Mammary epithelial cell (primary cell): ENCODE measurements at regions of chr16 and their contacts with region 1.

Region 1: DNA sequence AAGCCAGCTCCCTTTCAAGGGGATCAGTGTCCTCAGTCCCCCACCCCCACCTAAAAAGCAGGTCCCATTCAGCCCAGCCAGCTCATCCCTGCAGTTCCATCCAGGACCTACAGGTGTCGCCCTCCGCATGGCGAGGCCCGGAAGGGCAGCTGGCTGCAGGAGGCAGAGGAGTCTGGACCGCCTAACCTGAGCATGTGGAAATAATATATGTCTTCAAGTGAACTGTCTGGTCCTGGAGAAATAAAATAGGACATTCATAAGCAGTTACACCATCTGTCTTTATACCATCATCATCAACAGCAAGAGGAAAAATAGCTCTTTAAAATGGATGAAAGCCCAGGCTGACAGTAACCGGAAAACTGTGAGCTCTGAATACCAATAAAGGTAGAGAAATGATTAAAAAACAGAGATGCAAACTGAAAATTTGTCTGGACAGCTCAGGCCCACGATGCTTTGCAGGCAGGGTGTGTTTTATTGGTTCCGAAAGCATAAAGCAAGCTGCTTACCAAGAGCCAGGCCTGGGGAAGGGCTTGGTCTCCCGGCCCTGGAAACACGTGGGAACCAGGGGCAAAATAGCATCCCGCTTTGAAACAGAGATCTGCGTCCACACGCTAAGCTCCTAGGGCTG is 215.2 kb downstream of the ZFHX3 start:
- DNase-seq: peak; percentile 52
- H3K4me3 ChIP-seq: no peak overlapping the region
- H3K27ac ChIP-seq: no peak overlapping the region
- H3K4me1 ChIP-seq: peaks cover 6% of the 10 kb centered on the region
- H3K27me3 ChIP-seq: no peaks in the 10 kb centered on the region
- CTCF ChIP-seq: peak; percentile 98 to 99

Region 2: DNA sequence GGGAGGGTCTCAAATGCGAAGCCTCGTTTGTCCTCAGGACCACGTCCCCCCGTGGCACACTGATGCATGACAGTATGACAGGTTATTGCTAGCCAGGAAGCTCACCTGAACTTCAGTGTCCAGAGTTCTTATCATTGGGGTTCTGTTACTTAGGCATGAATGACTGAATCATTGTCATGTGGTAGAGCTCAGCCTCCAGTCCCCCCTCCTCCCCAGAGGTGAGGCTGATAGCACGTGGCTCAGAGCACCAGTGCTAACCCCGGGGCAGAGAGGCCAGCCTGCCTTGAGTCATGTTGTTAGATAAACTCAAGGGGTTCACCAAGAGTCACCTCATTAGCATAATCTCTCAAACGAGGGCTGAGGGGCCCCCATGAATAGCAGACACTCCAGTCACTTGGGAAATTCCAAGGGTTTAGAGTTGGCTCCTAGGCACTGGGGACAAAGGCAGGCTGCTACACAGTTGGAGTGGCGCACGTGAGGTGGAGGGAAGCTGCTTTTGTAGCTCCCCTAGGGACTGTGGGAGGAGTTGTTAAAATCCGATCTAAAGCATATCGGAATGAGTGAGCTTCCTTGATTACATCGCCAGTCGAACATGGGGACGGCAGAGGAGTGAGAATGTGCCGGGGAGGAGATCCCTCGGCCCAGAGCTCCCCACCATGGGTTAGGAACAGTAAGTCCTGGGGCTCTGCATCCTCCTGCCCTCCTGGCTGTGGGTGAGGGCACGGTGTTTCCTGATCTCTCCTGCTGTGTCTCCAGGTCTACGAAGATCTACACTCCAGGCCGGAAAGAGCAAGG is 720.9 kb before region 1 on chr16:
- CTCF ChIA-PET with region 1: interaction called, 17 read pairs
- dilution Hi-C with region 1: no loop called
- in situ Hi-C with region 1: no loop called
- intact Hi-C with region 1: no loop called
- DNase-seq: no peak
- H3K4me3 ChIP-seq: no peak overlapping the region
- H3K27ac ChIP-seq: no peak overlapping the region
- H3K4me1 ChIP-seq: no peaks in the 10 kb centered on the region
- H3K27me3 ChIP-seq: no peaks in the 10 kb centered on the region
- CTCF ChIP-seq: no peak

Region 3: DNA sequence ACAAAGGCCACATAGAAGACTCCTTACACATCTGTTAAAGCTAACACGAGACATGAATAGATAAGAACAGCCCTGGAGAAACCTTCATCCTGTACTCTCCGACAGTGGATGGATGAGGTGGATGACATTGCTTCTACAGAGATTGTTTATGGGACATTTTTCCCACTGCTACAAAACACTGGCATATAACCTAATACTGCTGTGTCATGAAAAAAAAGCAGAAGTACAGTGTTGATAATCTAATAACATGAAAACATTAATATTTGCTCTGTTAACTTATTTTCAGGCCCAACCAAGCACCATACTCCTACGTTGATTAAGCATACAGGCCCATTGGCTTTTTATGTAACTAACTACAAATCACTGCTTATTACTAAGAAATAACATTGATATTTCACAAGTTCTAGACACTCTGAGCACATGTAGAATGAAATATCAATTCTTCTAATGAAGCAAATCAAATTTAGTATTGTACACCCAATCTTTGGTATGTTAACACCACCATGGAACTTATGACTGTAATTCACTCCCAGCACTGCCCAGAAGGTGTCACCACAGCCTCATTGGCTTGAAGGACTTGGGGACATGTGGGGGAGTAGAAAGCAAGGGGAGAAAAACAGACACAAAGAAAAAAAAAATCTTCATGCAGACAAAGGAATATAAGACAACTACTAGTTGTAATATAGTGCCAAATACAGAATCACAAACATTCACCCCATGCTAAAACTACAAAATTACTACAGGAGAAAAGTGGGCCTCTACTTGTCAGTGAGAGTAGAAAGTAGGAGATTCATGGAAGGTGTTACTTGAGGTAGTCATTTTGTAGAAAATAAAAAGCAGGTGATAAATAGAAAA is 330.8 kb before region 1 on chr16:
- CTCF ChIA-PET with region 1: no interaction called
- dilution Hi-C with region 1: no loop called
- in situ Hi-C with region 1: no loop called
- intact Hi-C with region 1: loop called (anchors 1 kb)
- DNase-seq: peak; percentile 39
- H3K4me3 ChIP-seq: no peak overlapping the region
- H3K27ac ChIP-seq: no peak overlapping the region
- H3K4me1 ChIP-seq: no peaks in the 10 kb centered on the region
- H3K27me3 ChIP-seq: no peaks in the 10 kb centered on the region
- CTCF ChIP-seq: peak; percentile 84 to 91

Region 4: DNA sequence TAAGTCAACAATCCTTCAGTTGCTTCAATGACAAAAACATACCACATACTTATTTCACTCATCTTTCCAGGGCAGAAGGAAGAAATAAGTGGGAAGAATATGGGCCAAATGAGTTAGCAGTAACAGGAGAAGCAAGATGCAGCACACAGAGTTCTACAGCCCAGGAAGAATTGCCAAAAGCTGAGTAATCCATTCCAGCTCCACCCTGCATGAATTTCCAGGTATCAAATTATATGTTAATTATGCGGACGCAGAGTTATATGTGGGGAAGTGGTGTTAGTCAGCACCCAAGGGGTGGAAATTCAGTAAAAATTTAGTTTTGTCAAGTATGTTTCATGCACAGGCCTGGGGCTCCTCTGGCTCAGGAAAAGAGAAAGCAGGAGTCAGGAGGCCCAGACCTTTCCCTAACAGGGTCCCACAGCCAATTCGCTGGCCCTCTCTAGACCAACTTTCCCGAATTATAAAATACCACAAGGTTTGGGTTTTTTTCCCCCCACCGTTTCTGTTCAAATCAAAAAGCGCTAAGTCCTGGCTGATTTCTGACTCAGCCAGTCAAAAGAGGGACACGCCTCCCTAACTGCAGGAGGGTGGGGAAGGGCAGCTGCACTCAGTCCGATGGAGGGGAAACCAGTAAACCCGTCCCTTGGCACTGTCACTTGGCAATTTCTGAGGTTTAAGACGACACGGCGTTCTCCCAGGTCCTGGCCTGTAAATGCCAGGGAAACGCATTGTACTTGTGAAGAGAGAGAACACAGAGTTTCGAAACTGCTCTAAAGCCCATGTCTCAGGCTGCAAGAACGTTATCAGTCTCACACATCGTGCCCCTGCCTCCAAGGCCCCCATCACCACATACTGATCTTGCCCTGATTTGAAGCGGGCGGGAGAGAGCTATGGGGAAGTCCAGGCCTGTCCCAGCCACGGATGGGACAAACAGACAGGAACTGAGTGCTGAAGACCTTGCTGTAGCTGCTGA is 157.1 kb after region 1 on chr16:
- CTCF ChIA-PET with region 1: interaction called, 5 read pairs
- dilution Hi-C with region 1: no loop called
- in situ Hi-C with region 1: no loop called
- intact Hi-C with region 1: loop called (anchors 5 kb)
- DNase-seq: peak; percentile 94
- H3K4me3 ChIP-seq: peak overlapping the region in 1 of 3 experiments; percentile 7
- H3K27ac ChIP-seq: peak overlapping the region; percentile 78
- H3K4me1 ChIP-seq: peaks cover 46% of the 10 kb centered on the region
- H3K27me3 ChIP-seq: no peaks in the 10 kb centered on the region
- CTCF ChIP-seq: no peak

Region 5: DNA sequence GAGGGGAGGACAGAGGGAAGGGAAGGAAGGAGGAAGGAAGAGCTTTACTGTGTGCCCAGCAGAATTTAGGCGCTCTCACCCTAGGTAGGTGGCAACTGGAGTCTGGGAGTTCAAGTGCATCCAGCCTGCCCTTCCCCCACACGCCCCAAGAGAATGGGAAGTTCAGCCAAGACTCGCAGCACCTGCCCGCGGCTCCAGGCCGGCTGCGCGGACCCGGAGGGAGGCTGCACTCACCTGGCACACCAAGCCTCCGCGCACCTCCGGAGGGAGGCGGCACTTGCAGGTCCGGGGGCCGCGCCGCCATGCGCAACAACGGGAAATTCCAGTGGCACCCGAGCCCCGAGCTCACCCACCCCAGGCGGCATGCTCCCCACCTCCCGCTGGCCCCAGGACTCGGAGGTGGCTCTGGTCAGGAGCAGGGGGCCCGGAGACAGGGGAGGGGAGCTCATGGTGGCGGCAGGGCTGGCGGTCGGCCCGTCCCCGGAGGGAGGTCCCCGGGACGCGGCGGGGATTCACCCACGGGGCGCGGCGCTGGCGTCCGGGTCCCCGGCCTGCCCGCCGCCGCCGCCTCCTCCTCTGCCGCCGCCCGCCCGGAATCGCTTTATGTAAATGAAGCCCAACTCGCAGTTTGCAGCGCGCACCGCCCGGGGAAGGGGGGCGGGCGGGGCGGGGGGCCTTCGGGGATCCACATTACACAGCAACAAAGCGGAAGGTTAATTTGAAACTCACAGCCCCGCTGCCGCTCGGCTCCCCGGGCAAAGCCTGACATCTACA is 215.0 kb after region 1 on chr16 and contains the start of gene ZFHX3:
- CTCF ChIA-PET with region 1: no interaction called
- dilution Hi-C with region 1: no loop called
- in situ Hi-C with region 1: no loop called
- intact Hi-C with region 1: loop called (anchors 2 kb)
- DNase-seq: peak; percentile 70
- H3K4me3 ChIP-seq: peak within 1 kb of the TSS; percentile 56 to 74 (median 57)
- H3K27ac ChIP-seq: peak within 1 kb of the TSS; percentile 34
- H3K4me1 ChIP-seq: peaks cover 22% of the 10 kb centered on the region
- H3K27me3 ChIP-seq: no peaks in the 10 kb centered on the region
- CTCF ChIP-seq: peak in 1 of 2 donors; percentile 9
- total RNA-seq, gene ZFHX3: 6.7 to 11.3 TPM

Region 6: DNA sequence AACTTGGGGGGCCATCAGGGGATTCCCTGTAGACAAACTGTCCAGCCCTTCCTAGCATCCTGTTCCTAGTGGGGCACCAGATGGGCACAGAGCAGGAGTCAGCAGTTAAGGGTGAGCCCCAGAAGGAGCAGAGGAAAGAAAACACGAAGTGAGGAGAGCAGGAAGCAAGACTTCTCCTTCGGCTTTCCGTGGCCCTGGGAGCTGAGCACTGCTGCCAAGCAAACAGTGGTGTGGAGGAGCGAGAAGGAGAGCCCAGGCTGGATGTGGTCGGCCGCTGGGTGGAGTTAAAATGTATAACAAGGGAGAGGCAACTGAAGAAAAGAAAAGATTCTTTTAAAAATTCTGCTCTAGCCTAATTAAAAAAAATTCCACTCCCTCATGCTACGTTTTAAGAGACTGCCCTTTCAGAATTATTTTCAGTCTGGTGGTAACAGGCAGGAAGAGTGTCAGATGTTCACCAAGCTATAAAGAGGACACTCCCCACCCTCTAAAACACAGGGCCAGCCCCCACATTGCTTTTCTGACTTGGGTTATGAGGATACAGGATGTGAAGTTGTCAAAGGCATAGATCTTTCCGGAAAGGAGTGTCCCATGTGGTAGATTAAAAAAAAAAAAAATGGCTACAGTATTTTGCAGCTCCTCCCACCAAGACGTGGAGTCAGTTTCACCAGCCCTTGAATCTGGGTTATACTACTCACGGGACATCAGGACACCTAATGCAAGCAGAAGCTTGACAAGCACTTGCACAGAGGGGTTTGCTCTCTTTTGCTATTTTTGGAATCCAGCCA is 290.1 kb after region 1 on chr16:
- CTCF ChIA-PET with region 1: no interaction called
- dilution Hi-C with region 1: no loop called
- in situ Hi-C with region 1: no loop called
- intact Hi-C with region 1: no loop called
- DNase-seq: no peak
- H3K4me3 ChIP-seq: no peak overlapping the region
- H3K27ac ChIP-seq: no peak overlapping the region
- H3K4me1 ChIP-seq: no peaks in the 10 kb centered on the region
- H3K27me3 ChIP-seq: no peaks in the 10 kb centered on the region
- CTCF ChIP-seq: no peak

Region 7: DNA sequence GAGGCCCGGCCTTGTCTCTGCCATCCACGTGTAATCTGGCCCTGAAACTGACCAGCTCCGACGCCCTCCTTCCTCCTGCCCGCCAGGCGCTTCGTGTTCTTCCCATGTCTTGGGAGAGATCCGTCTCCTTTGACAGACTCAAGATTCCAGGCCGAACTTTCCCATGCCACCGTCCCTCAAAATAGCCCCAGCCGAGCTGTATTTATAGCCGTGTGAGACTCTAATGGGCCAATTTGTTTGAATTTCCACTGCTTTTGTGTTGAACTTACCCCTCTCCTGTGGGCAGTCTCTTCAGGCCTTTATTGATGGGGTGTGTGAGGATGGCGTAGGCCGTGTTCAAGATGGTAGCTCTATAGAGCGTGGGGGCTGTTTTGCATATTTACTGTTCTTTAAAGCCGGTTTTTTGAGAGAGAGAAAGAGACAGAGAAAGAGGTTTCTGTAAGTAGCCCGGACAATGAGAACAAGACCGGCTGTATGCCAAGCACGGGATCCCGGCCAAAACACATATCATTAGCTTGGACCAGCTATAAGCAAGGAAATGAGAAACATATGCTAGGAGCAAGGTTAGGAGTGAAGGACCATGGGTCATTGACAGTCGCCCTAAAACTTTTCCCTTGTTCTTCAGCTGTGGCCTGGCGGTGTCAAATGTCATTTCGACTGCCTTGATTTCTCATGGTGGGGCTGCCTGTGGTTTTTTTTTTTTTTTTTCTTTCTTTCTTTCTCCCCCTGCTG is 339.7 kb after region 1 on chr16:
- CTCF ChIA-PET with region 1: interaction called, 31 read pairs
- dilution Hi-C with region 1: no loop called
- in situ Hi-C with region 1: no loop called
- intact Hi-C with region 1: loop called (anchors 1 kb)
- DNase-seq: peak; percentile 42
- H3K4me3 ChIP-seq: no peak overlapping the region
- H3K27ac ChIP-seq: no peak overlapping the region
- H3K4me1 ChIP-seq: no peaks in the 10 kb centered on the region
- H3K27me3 ChIP-seq: no peaks in the 10 kb centered on the region
- CTCF ChIP-seq: peak in 1 of 2 donors; percentile 39